MCF 10A (cell line): ENCODE measurements at regions of chr7 and their contacts with region 1.

Region 1: DNA sequence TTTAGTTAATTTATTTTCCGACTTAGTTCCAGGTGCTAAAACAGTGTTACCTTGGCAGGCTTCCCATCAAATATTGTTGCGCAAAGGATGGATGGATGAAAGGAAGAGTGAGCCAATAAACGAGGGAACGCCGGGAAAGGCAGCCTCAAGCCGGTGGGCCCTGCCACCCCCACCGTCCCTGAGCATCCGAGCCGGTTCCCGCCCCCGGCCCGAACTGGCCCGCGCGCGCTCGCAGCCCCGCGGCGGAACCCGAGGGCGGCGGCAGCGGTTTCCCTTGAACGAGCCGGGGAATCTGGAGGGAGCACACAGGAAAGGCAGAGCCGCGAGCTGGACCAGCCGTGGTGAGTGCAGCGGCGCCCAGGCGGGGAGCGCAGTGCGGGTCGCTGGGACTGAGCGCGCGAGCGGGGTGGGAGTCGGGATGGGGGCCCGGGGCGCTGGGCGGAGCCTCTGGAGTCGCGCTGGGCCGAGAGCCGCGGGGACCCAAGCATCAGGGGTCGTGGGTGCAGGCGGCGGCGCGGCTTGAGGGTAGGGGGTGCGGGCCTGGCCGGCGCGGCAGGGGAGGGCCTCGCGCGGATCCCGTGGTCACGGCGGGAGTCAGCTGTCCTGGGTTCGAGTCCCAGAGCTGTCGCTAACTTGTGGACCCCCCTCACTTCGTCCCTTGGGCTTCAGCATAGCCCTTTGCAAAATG is at the start of gene AGK:
- DNase-seq: peak; percentile 64
- H3K4me3 Mint-ChIP-seq: peak within 1 kb of the TSS; percentile 85
- H3K27ac Mint-ChIP-seq: peak within 1 kb of the TSS; percentile 72
- H3K4me1 Mint-ChIP-seq: peaks cover 19% of the 10 kb centered on the region
- H3K27me3 Mint-ChIP-seq: no peaks in the 10 kb centered on the region
- CTCF ChIP-seq: no peak
- total RNA-seq, gene AGK: 35.4 and 41.4 TPM in 2 replicates

Region 2: GRCh38 chr7:141362580-141363435 is 188.4 kb before region 1 on chr7:
- CTCF ChIA-PET with region 1: interaction called, 3 read pairs
- POLR2A ChIA-PET with region 1: no interaction called
- intact Hi-C with region 1: loop called (anchors 10 kb)
- DNase-seq: peak; percentile 81
- H3K4me3 Mint-ChIP-seq: peak overlapping the region; percentile 46
- H3K27ac Mint-ChIP-seq: peak overlapping the region; percentile 57
- H3K4me1 Mint-ChIP-seq: peaks cover 10% of the 10 kb centered on the region
- H3K27me3 Mint-ChIP-seq: no peaks in the 10 kb centered on the region
- CTCF ChIP-seq: no peak